Dendritic cell treated with granulocyte-macrophage colony-stimulating factor and Interleukin-4, amounts not matched to agents 40 ng/mL and 50 ng/mL, for 4 days (primary cell): ENCODE measurements at regions of chr5 and their contacts with region 1.

Region 1: GRCh38 chr5:112160652-112161391 is 258.3 kb downstream of the EPB41L4A start:
- H3K4me3 Mint-ChIP-seq: peak overlapping the region; percentile 94
- H3K27ac Mint-ChIP-seq: peak overlapping the region; percentile 90
- H3K4me1 Mint-ChIP-seq: peaks cover 24% of the 10 kb centered on the region
- H3K27me3 Mint-ChIP-seq: peaks cover 2% of the 10 kb centered on the region

Region 2: DNA sequence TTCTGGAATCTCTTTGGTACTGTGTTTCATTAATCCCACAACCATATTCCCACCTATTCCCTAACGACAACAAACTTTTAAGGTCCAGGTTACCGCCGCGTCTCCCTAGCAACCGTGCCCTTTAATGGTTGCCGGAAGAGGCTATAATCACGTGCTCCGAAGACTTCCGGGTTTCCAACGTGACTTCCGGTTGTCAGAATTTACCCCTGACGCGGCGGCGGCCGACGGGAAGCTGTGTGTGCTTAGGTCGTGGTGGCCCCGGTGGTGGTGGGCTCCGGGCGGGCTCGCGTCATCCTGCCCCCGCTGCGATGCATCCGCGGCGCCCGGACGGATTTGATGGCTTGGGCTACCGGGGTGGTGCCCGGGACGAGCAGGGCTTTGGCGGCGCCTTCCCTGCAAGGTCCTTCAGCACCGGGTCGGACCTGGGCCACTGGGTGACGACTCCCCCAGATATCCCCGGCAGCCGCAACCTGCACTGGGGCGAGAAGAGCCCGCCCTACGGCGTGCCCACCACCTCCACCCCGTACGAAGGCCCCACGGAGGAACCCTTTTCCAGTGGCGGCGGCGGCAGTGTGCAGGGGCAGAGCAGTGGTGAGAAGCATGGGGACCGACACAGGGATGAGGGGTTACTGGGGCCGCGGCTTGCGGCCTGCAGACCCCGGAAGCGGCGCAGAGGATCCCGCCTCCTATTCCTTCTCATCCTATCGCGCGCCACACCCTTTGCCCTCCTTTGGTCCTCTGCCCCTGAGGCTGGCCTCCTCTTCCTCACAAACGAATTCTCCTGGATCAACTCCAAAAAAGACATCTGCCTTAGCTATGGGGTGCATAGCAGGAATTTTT is 1421.8 kb before region 1 on chr5 and contains the start of gene SLC25A46:
- intact Hi-C with region 1: loop called (anchors 5 kb)
- H3K4me3 Mint-ChIP-seq: peak within 1 kb of the TSS; percentile 96
- H3K27ac Mint-ChIP-seq: peak within 1 kb of the TSS; percentile 95
- H3K4me1 Mint-ChIP-seq: peaks cover 33% of the 10 kb centered on the region
- H3K27me3 Mint-ChIP-seq: peaks cover 7% of the 10 kb centered on the region